Dendritic cell treated with granulocyte-macrophage colony-stimulating factor and Interleukin-4, amounts not matched to agents 40 ng/mL and 50 ng/mL, for 4 days (primary cell): ENCODE measurements at regions of chr15 and their contacts with region 1.

Region 1: GRCh38 chr15:49863431-49864205 is 242.8 kb downstream of the DTWD1 start:
- H3K4me3 Mint-ChIP-seq: no peak overlapping the region
- H3K27ac Mint-ChIP-seq: no peak overlapping the region
- H3K4me1 Mint-ChIP-seq: no peaks in the 10 kb centered on the region
- H3K27me3 Mint-ChIP-seq: no peaks in the 10 kb centered on the region

Region 2: DNA sequence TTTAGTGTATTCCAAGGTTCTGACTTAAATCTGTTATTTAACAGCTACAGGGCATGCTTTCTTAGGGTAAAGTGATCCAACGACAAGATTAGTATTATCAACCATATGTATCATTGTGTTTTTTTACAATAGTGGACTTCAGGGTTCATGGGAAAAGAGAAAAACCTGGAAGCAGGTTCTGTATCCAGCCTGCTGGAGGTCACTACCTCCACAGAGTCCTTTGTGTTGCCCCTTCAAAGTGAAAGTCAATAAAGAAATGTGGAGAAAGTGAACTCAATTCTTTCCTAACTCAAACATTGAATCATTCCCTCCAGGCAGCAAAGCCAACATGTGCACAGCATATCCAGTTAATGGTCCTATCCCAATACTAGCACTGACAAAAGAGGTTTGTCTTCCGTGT is 395.2 kb before region 1 on chr15:
- intact Hi-C with region 1: loop called (anchors 10 kb)
- H3K4me3 Mint-ChIP-seq: no peak overlapping the region
- H3K27ac Mint-ChIP-seq: no peak overlapping the region
- H3K4me1 Mint-ChIP-seq: peaks cover 12% of the 10 kb centered on the region
- H3K27me3 Mint-ChIP-seq: no peaks in the 10 kb centered on the region